ENCODE measurements at regions of chr14 and their contacts with region 1.

Region 1: DNA sequence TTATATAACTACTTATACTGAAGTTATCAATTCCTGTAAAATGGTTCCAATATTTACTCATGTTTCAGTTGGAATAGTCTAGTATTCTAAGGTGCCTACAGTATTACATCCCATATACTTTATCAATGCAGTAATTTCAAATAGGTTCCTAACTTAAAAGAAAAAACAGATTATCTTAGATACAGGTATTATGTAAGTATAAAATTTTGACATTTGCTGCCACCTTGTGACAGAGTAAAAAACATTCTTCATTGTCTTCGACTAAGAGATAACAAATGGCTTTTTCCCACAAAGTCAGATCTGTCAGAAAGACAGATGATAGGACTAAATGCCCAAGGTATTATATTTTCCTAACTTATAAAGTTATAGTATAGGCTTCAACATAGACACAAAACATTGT is 78.7 kb downstream of the TXNDC16 start:
- DNase-seq: no peak
- H3K4me3 ChIP-seq: no peak overlapping the region
- H3K27ac ChIP-seq: no peak overlapping the region
- H3K4me1 ChIP-seq: no peaks in the 10 kb centered on the region
- H3K27me3 ChIP-seq: no peaks in the 10 kb centered on the region
- CTCF ChIP-seq: peak; percentile 4 to 41 (median 30)
- POLR2A ChIP-seq: no peak

Region 2: DNA sequence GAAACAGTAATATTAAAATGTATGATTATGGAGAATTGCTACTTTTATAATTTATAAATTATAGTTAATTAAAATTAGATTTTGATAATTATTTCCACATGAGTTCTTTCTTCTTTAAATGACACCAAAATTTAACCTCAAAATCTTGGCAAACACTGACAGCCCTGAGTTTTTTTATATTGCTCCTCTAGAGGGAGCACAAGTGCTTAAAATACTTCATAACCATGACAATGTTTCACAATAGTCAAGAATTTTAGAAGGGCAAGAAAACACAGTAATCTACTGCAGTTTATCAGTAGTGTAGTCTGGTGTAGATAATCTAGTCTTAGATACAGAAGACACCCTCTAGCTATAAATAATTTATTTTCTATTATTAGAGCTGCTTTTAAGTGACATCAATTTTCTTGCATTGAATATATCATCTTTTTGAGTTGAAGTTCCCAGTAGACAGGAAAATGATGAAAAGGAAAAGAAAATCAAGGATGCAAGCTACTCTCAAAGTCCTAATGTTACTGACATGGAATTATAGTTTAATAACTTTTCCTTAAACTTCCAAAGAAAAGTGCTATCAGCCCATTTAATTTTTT is 173.8 kb before region 1 on chr14:
- intact Hi-C with region 1: loop called (anchors 10 kb)
- DNase-seq: no peak
- H3K4me3 ChIP-seq: no peak overlapping the region
- H3K27ac ChIP-seq: no peak overlapping the region
- H3K4me1 ChIP-seq: no peaks in the 10 kb centered on the region
- H3K27me3 ChIP-seq: no peaks in the 10 kb centered on the region
- CTCF ChIP-seq: peak; percentile 49 to 62 (median 49)
- POLR2A ChIP-seq: no peak

Measured in vagina (tissue), 2 donors.